Activated CD4-positive, alpha-beta memory T cell treated with anti-CD3 and anti-CD28 coated beads, Interleukin-2, amount 10 ng/mL, durations not matched to agents 7 days and 5 days (primary cell): ENCODE measurements at regions of chr14 and their contacts with region 1.

Region 1: GRCh38 chr14:93975791-93976476 is 436 bp downstream of the ASB2 start:
- DNase-seq: peak; percentile 52
- H3K4me3 Mint-ChIP-seq: peak overlapping the region; percentile 78
- H3K27ac Mint-ChIP-seq: peak overlapping the region; percentile 97
- H3K4me1 Mint-ChIP-seq: peaks cover 89% of the 10 kb centered on the region
- H3K27me3 Mint-ChIP-seq: no peaks in the 10 kb centered on the region

Region 2: GRCh38 chr14:93543766-93544165 is 432.2 kb before region 1 on chr14:
- CTCF ChIA-PET with region 1: no interaction called
- POLR2A ChIA-PET with region 1: no interaction called
- DNase-seq: no peak
- H3K4me3 Mint-ChIP-seq: no peak overlapping the region
- H3K27ac Mint-ChIP-seq: no peak overlapping the region
- H3K4me1 Mint-ChIP-seq: no peaks in the 10 kb centered on the region
- H3K27me3 Mint-ChIP-seq: peaks cover 17% of the 10 kb centered on the region

Region 3: DNA sequence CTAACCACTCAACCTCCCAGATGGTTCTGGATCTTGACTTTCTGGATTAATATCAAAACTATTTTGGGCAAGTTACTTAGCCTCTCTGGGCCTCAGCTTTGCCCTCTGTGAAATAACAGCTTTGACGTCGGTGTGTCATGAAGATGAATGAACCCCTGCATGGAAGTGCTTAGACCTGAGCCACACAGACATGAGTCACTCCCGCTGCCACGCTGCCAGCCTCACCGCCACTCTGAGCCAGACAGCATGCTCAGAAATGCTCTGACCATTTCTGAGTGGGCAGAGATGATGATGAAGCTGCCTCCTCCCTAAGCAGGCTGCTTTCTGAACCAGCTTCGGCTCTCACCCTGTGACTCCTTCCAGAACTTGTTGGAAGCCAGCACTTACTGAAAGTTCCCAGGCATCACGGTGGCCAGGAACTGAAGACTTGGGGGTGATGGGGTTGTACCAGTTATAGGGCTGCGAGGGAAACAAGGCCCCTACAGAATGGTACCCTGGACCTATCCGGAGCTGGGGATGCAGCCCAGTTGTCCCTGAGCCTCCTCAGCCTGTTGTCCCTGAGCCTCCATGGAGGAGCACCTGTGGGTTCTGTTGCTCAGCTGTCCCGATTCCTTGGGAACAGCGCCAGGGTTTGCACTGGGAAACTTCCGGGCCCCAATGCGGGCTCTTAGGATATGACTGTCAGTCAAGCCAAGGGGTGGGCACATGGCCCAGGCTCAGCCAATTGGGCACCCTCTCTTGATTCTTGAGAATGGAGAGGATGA is 19.2 kb after region 1 on chr14:
- CTCF ChIA-PET with region 1: interaction called, 35 read pairs
- POLR2A ChIA-PET with region 1: interaction called, 19 read pairs
- DNase-seq: peak; percentile 56
- H3K4me3 Mint-ChIP-seq: no peak overlapping the region
- H3K27ac Mint-ChIP-seq: no peak overlapping the region
- H3K4me1 Mint-ChIP-seq: peaks cover 35% of the 10 kb centered on the region
- H3K27me3 Mint-ChIP-seq: no peaks in the 10 kb centered on the region

Region 4: DNA sequence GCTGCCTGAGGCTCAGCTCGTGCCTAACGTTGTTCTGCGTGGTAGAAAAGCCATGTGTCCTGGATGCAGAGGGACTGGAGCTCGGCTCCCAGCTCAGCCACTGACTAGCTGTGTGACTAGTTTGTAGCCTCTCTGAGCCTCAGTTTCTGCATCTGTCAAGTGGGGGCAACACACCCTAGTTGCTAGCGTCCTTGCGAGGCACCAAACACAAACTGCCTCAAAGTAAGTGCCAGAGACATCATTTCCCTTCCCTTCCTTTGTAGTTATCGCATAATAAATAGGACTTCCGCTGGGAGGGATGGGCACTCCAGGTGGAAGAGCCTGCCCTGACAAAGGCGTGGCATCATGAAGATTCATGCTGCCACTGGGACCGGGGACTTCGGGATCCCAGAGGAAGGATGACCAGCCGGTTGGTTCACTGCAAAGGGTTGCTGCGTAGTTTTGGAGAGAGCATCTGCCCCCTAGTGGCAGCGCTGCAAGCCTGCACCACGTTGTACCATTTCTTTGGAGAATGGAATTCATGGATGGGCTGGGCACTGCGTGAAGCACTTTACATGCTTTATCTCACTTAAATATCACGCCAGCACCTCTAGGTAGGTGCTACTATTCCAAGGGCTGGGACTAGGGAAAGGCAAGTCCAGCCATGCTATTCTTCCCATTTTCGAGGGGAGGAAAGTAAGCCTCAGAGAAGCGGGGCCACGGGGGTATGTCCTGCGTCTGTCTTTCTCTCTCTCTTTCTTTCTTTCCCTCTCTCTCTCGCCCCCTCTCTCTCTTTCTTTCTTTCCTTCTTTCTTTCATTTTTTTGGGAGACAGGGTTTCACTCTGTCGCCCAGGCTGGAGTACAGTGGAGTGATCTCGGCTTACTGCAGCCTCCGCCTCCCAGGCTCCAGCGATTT is 25.8 kb after region 1 on chr14:
- CTCF ChIA-PET with region 1: interaction called, 35 read pairs
- POLR2A ChIA-PET with region 1: interaction called, 19 read pairs
- DNase-seq: peak; percentile 65
- H3K4me3 Mint-ChIP-seq: no peak overlapping the region
- H3K27ac Mint-ChIP-seq: peak overlapping the region; percentile 21
- H3K4me1 Mint-ChIP-seq: peaks cover 45% of the 10 kb centered on the region
- H3K27me3 Mint-ChIP-seq: peaks cover 6% of the 10 kb centered on the region

Region 5: GRCh38 chr14:94021001-94021400 is 45.1 kb after region 1 on chr14:
- CTCF ChIA-PET with region 1: no interaction called
- POLR2A ChIA-PET with region 1: interaction called, 12 read pairs
- DNase-seq: no peak
- H3K4me3 Mint-ChIP-seq: no peak overlapping the region
- H3K27ac Mint-ChIP-seq: peak overlapping the region; percentile 78
- H3K4me1 Mint-ChIP-seq: peaks cover 53% of the 10 kb centered on the region
- H3K27me3 Mint-ChIP-seq: peaks cover 3% of the 10 kb centered on the region

Region 6: DNA sequence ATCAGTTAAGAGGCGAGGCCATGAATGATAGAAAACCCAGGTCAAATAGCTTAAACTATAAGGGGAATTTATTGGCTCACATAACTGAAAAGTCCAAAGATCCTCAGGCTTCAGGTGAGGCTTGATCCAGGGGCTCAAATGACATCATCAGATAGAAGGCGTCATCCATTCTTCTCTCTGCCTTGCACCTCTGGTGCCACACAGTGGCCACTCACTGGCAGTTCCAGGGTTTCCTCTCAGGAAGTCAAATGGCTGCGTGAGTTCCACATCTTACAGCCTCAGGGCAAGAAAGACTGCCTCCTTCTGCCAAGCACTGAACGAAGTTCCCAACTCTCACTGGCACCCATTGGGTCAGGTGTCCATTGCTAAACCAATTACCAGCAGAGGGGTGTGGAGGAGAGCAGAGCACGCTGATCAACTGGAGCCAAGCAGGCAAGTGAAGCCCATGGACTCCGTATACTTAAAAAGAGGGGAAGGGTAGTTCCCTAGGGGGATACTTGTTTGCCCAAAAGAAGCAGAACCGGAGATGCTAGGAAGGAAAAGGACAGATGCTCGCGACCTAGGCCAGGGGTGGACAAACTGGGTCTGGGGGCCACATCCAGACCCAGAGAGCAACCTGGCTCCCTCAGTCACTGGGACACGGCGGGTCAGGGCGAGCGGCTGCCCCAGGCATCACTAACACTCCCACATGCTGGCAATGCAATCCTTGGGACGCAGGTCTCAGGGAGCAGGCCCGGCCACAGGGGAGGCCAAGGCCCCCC is 705.5 kb after region 1 on chr14:
- CTCF ChIA-PET with region 1: no interaction called
- POLR2A ChIA-PET with region 1: no interaction called
- DNase-seq: no peak
- H3K4me3 Mint-ChIP-seq: no peak overlapping the region
- H3K27ac Mint-ChIP-seq: no peak overlapping the region
- H3K4me1 Mint-ChIP-seq: no peaks in the 10 kb centered on the region
- H3K27me3 Mint-ChIP-seq: no peaks in the 10 kb centered on the region